ENCODE measurements at regions of chr1 and their contacts with region 1.

Region 1: DNA sequence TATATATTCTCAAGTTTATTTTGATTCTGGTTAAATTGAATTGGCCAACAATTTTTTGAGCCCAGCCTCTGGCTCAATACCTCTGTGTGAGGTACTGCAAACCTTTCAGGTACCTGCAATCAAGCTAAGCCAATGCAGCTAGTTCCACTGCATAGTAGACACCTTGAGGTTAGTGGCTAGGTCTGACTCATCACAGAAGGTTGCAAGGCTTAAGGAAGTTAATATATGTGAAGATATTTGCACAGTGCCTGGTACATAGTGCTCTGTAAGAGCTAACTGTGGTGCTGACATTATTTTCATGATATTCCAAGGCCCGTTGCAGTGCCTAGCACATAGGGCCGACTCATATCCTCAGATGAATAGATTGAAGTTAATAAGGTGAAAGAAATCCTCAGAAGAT is 330.5 kb upstream of the KAZN start:
- DNase-seq: peak; percentile 84
- ATAC-seq: peak; percentile 100
- H3K4me3 ChIP-seq: no peak overlapping the region
- H3K27ac ChIP-seq: no peak overlapping the region
- H3K4me1 ChIP-seq: no peaks in the 10 kb centered on the region; the same call in 1 of the 2 replicates
- H3K27me3 ChIP-seq: no peaks in the 10 kb centered on the region
- CTCF ChIP-seq: no peak

Region 2: DNA sequence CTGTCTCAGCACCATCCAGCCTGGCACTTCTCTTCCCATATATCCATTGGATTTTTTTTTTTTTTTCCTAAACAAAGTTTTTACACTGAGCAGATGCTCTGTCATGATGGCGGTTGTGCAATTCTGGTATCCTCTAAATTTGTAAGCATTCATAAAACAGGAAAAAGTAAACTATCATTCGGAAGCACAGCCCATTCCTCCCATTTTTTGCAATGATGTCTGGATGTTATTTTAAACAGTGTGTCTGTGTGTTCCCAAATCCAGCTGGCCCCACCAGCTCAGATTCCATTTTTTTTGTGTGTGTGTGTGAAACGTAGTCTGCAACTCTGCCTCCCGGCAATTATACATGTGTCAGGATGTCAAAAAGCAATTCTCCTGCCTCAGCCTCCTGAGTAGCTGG is 650.9 kb before region 1 on chr1:
- CTCF ChIA-PET with region 1: interaction called, 16 read pairs
- POLR2A ChIA-PET with region 1: no interaction called
- intact Hi-C with region 1: no loop called
- DNase-seq: no peak
- ATAC-seq: no peak
- H3K4me3 ChIP-seq: no peak overlapping the region
- H3K27ac ChIP-seq: no peak overlapping the region
- H3K4me1 ChIP-seq: no peaks in the 10 kb centered on the region
- H3K27me3 ChIP-seq: no peaks in the 10 kb centered on the region
- CTCF ChIP-seq: no peak

Region 3: GRCh38 chr1:14292520-14292919 is 24.5 kb after region 1 on chr1:
- CTCF ChIA-PET with region 1: no interaction called
- POLR2A ChIA-PET with region 1: no interaction called
- intact Hi-C with region 1: no loop called
- DNase-seq: no peak
- ATAC-seq: no peak
- H3K4me3 ChIP-seq: no peak overlapping the region
- H3K27ac ChIP-seq: no peak overlapping the region
- H3K4me1 ChIP-seq: peaks cover 18% of the 10 kb centered on the region
- H3K27me3 ChIP-seq: no peaks in the 10 kb centered on the region
- CTCF ChIP-seq: no peak